PC-3 (cell line): ENCODE measurements at regions of chr6 and their contacts with region 1.

Region 1: GRCh38 chr6:113690281-113691259 is 166.6 kb upstream of the MARCKS start:
- DNase-seq: peak; percentile 80
- ATAC-seq: peak; percentile 76
- H3K4me3 ChIP-seq: no peak overlapping the region
- H3K27ac ChIP-seq: peak overlapping the region; percentile 58
- H3K4me1 ChIP-seq: peaks cover 35% of the 10 kb centered on the region
- H3K27me3 ChIP-seq: no peaks in the 10 kb centered on the region
- CTCF ChIP-seq: no peak

Region 2: GRCh38 chr6:113352029-113352801 is 338.4 kb before region 1 on chr6:
- CTCF ChIA-PET with region 1: no interaction called
- POLR2A ChIA-PET with region 1: no interaction called
- intact Hi-C with region 1: loop called (anchors 5 kb)
- DNase-seq: peak; percentile 87
- ATAC-seq: peak; percentile 90
- H3K4me3 ChIP-seq: 0 out of 2 replicates have a peak overlapping the region, but pooled peaks have one; percentile 23
- H3K27ac ChIP-seq: peak overlapping the region; percentile 91
- H3K4me1 ChIP-seq: peaks cover 46% of the 10 kb centered on the region
- H3K27me3 ChIP-seq: no peaks in the 10 kb centered on the region
- CTCF ChIP-seq: no peak

Region 3: DNA sequence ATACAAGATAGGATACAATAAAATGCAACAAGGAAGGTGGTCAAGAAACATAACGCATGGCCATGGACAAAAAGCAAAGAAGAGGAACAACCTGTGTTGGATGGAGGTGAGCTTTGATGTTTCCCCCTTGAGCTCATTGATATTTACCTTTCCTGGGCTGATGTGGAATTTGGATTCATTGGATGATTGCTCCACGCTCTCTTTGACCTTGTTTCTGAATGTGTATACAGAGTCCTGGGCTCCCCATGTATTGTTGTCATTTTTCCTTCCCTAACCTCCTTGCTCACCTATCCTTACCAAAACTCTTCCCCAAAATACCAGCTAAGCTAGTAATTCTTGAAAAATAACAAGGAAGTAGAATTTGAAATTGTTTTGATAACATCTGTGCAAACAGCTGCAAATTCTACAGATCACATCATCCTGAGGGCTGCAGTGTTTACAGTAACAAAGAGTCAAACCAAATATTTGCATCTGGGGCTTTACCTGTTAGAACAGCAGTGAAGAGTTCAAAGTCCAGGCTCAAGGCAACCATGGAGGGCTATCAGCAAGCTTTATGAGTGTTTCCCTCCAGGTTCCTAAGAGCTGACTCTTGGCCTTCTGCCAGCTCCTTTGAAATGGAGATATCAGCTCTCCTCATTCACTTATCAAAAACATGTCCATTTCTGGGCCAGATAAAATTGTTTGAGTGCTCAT is 47.7 kb before region 1 on chr6:
- CTCF ChIA-PET with region 1: no interaction called
- POLR2A ChIA-PET with region 1: no interaction called
- intact Hi-C with region 1: loop called (anchors 5 kb)
- DNase-seq: peak; percentile 67
- ATAC-seq: peak; percentile 76
- H3K4me3 ChIP-seq: no peak overlapping the region
- H3K27ac ChIP-seq: peak overlapping the region; percentile 39
- H3K4me1 ChIP-seq: peaks cover 35% of the 10 kb centered on the region
- H3K27me3 ChIP-seq: no peaks in the 10 kb centered on the region
- CTCF ChIP-seq: no peak